SK-N-SH (cell line): ENCODE measurements at regions of chr3 and their contacts with region 1.

Region 1: DNA sequence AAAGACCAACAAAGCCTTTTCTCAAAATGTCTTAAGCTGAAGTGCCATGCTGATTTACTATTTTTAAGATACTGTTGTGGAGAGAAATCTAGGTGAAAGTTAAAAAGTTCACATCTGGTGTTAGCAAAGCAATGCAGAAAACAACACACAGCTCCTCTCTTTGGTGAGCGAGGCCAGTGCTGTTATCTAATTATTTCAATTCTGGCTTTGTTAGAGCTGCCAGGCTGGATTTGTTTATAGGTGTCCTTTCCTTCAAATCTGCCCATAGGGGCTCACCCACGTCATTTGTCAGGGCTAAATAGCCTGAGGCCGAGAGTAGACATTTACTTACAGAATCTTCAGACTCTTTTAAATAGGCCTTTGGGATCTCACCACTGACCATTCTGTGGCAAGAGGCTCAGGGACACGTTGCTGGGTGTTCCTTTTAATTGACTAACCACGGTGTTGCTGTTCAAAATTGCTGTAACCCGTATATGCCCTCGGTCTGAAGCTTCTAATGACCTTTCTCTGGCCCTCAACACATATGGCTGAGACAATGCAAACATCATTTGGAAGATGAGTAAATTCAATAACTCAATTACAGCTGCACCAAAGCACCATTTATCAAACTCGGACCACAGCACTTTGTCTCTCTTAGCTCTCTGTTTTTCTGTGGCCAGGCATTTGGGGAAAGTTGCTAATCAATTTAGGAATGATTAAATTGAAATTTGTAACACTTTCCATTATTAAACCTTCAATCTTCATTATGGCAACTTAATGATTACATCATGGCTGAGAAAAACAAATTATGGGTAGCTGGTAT is 152.6 kb downstream of the PDZRN3 start:
- DNase-seq: peak; percentile 45
- H3K4me3 ChIP-seq: no peak overlapping the region
- H3K27ac ChIP-seq: peak overlapping the region in 1 of 2 experiments; percentile 99; a peak in 2 of 4 replicates
- H3K4me1 ChIP-seq: peaks cover 0 to 47% of the 10 kb centered on the region in 2 experiments; a peak in 2 of 4 replicates
- H3K27me3 ChIP-seq: no peaks in the 10 kb centered on the region
- CTCF ChIP-seq: no peak
- EP300 ChIP-seq: peak in 1 of 2 experiments; percentile 93; a peak in 2 of 4 replicates
- RAD21 ChIP-seq: peak; percentile 18; the same call in 1 of the 2 replicates

Region 2: GRCh38 chr3:73484656-73485248 is 12.6 kb after region 1 on chr3:
- CTCF ChIA-PET with region 1: interaction called, 7 read pairs
- POLR2A ChIA-PET with region 1: interaction called, 25 read pairs
- DNase-seq: no peak
- H3K4me3 ChIP-seq: no peak overlapping the region
- H3K27ac ChIP-seq: peak overlapping the region; percentile 71 to 96
- H3K4me1 ChIP-seq: peaks cover 14 to 54% of the 10 kb centered on the region in 2 experiments
- H3K27me3 ChIP-seq: no peaks in the 10 kb centered on the region
- CTCF ChIP-seq: no peak
- EP300 ChIP-seq: no peak
- RAD21 ChIP-seq: no peak